GM10248 (cell line): ENCODE measurements at regions of chr6 and their contacts with region 1.

Region 1: GRCh38 chr6:347232-347631 is 44.3 kb upstream of the IRF4 start:
- DNase-seq: peak; percentile 83
- CTCF ChIP-seq: peak; percentile 7

Region 2: GRCh38 chr6:235763-236360 is 111.4 kb before region 1 on chr6:
- CTCF ChIA-PET with region 1: no interaction called
- POLR2A ChIA-PET with region 1: no interaction called
- DNase-seq: no peak
- CTCF ChIP-seq: no peak

Region 3: DNA sequence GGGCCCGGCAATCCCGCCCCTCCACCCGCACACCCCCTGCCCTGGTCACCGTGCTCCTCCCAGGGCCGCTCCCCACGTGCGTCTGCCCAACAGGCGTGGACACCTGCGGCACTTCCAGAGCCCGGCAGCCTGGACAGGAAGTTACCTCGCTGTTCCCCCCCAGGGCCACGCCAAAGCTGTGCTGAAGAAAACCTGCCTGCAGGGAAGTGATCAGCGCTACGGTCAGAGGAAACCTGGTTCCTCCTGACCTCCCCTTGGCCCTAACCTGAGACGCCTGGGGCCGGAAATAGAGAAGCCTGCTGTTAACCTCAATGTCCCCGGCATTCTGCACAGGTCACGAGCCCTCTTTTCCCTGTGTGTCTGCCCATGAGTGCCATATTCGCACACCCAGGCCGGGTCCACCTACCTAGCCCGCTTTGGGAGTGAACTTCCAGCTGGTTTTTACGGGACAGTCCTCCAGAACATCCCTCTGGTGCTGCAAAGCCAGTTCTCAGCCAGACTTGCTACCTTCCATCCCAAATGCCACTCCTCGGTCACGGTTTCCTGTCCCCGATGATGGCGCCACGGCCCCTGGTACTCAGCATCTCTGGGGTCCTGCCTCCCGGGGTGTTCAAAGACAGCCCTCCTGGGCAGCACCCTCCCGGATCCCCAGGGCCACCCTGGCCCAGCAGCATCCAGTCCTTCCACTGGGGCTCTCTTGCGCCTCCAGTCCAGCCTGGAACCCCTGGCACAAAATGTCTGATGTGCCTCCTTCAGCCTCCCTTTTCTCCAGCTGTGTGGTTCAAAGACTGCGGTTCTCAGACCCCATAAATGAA is 32.3 kb after region 1 on chr6:
- CTCF ChIA-PET with region 1: interaction called, 10 read pairs
- POLR2A ChIA-PET with region 1: no interaction called
- DNase-seq: peak; percentile 79
- CTCF ChIP-seq: no peak